Activated CD4-positive, alpha-beta T cell treated with anti-CD3 and anti-CD28 coated beads for 36 hours (primary cell): ENCODE measurements at regions of chr11 and their contacts with region 1.

Region 1: GRCh38 chr11:6377902-6378639 is 12.2 kb upstream of the SMPD1 start:
- DNase-seq: no peak
- ATAC-seq: peak; percentile 79
- H3K4me3 Mint-ChIP-seq: no peak overlapping the region
- H3K27ac Mint-ChIP-seq: peak overlapping the region; percentile 79
- H3K4me1 Mint-ChIP-seq: peaks cover 26% of the 10 kb centered on the region
- H3K27me3 Mint-ChIP-seq: no peaks in the 10 kb centered on the region

Region 2: GRCh38 chr11:6111673-6112072 is 266.4 kb before region 1 on chr11:
- CTCF ChIA-PET with region 1: no interaction called
- POLR2A ChIA-PET with region 1: no interaction called
- intact Hi-C with region 1: no loop called
- DNase-seq: no peak
- ATAC-seq: no peak
- H3K4me3 Mint-ChIP-seq: no peak overlapping the region
- H3K27ac Mint-ChIP-seq: no peak overlapping the region
- H3K4me1 Mint-ChIP-seq: no peaks in the 10 kb centered on the region
- H3K27me3 Mint-ChIP-seq: peaks cover 6% of the 10 kb centered on the region

Region 3: GRCh38 chr11:6389921-6390724 is 12.1 kb after region 1 on chr11 and contains the start of gene SMPD1:
- CTCF ChIA-PET with region 1: interaction called, 47 read pairs
- POLR2A ChIA-PET with region 1: interaction called, 5 read pairs
- intact Hi-C with region 1: loop called in 1 of 2 experiments (anchors 1 kb)
- DNase-seq: peak; percentile 97
- ATAC-seq: peak; percentile 90
- H3K4me3 Mint-ChIP-seq: peak within 1 kb of the TSS; percentile 77
- H3K27ac Mint-ChIP-seq: peak within 1 kb of the TSS; percentile 93
- H3K4me1 Mint-ChIP-seq: peaks cover 55% of the 10 kb centered on the region
- H3K27me3 Mint-ChIP-seq: no peaks in the 10 kb centered on the region
- total RNA-seq, gene SMPD1: 13.1 to 14.1 TPM

Region 4: GRCh38 chr11:6431861-6432260 is 53.8 kb after region 1 on chr11:
- CTCF ChIA-PET with region 1: interaction called, 18 read pairs
- POLR2A ChIA-PET with region 1: no interaction called
- intact Hi-C with region 1: no loop called
- DNase-seq: no peak
- ATAC-seq: no peak
- H3K4me3 Mint-ChIP-seq: no peak overlapping the region
- H3K27ac Mint-ChIP-seq: no peak overlapping the region
- H3K4me1 Mint-ChIP-seq: peaks cover 5% of the 10 kb centered on the region
- H3K27me3 Mint-ChIP-seq: no peaks in the 10 kb centered on the region

Region 5: GRCh38 chr11:6473481-6474422 is 95.7 kb after region 1 on chr11 and contains the start of gene TRIM3:
- CTCF ChIA-PET with region 1: interaction called, 27 read pairs
- POLR2A ChIA-PET with region 1: no interaction called
- intact Hi-C with region 1: no loop called
- DNase-seq: peak; percentile 74
- ATAC-seq: peak; percentile 59
- H3K4me3 Mint-ChIP-seq: peak within 1 kb of the TSS; percentile 75
- H3K27ac Mint-ChIP-seq: peak within 1 kb of the TSS; percentile 66
- H3K4me1 Mint-ChIP-seq: peaks cover 12% of the 10 kb centered on the region
- H3K27me3 Mint-ChIP-seq: peaks cover 3% of the 10 kb centered on the region
- total RNA-seq, gene TRIM3: 3.8 to 4.2 TPM

Region 6: DNA sequence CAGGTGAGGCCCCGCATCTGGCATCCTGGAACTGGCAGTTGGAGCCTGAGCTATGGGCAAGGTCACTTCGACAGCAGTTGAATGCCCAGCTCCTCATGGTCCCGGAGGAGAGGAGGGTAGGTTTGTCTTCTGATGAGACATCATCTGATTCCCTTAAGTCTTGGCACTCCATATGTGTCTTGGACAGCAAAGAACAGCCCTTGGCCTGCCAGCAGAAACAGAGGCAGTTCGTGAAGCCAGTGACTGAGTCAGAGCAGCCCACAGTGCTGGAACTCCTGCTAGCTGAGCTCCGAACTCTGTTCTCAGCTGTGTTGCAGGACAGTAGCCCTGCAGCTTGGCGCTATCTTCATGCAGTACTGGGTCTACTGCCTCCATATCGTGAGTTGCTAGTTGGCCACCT is 120.0 kb after region 1 on chr11:
- CTCF ChIA-PET with region 1: interaction called, 69 read pairs
- POLR2A ChIA-PET with region 1: interaction called, 4 read pairs
- intact Hi-C with region 1: no loop called
- DNase-seq: no peak
- ATAC-seq: no peak
- H3K4me3 Mint-ChIP-seq: no peak overlapping the region
- H3K27ac Mint-ChIP-seq: no peak overlapping the region
- H3K4me1 Mint-ChIP-seq: no peaks in the 10 kb centered on the region
- H3K27me3 Mint-ChIP-seq: no peaks in the 10 kb centered on the region

Region 7: GRCh38 chr11:6531267-6531752 is 153.2 kb after region 1 on chr11:
- CTCF ChIA-PET with region 1: interaction called, 20 read pairs
- POLR2A ChIA-PET with region 1: no interaction called
- intact Hi-C with region 1: no loop called
- DNase-seq: peak; percentile 26
- ATAC-seq: peak; percentile 71
- H3K4me3 Mint-ChIP-seq: no peak overlapping the region
- H3K27ac Mint-ChIP-seq: no peak overlapping the region
- H3K4me1 Mint-ChIP-seq: peaks cover 11% of the 10 kb centered on the region
- H3K27me3 Mint-ChIP-seq: no peaks in the 10 kb centered on the region

Region 8: DNA sequence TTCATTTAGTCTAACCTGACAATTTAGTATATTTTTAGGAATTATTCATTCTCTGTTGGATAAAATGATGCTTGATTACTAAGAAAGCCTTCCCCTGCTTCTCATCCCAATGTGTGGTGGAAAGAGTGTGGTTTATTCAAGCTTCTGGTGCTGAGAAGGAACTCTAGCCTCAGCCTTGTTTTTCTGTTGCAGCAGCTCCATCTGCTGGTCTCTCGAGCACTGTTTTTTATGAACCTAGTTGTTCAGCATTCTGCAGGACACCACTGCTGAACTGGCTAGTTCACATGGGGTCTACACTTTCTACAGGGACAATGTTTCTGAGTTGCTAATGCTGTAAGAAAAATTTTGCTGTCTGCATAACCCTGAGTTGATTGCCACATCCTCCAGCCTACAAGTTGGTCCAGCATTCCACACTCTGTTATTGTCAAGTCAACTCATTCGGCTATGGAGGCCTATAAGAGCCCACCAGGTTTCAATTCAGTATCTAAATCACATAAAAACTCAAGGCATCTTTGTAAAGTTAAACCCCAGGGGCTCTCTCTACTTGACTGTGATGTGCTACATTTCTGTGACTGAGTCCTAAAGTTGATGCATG is 379.4 kb after region 1 on chr11:
- CTCF ChIA-PET with region 1: interaction called, 7 read pairs
- POLR2A ChIA-PET with region 1: no interaction called
- intact Hi-C with region 1: loop called in 1 of 2 experiments (anchors 1 kb)
- DNase-seq: peak; percentile 76
- ATAC-seq: peak; percentile 85
- H3K4me3 Mint-ChIP-seq: no peak overlapping the region
- H3K27ac Mint-ChIP-seq: no peak overlapping the region
- H3K4me1 Mint-ChIP-seq: peaks cover 10% of the 10 kb centered on the region
- H3K27me3 Mint-ChIP-seq: no peaks in the 10 kb centered on the region